CD8-positive, alpha-beta memory T cell (primary cell): ENCODE measurements at regions of chr17 and their contacts with region 1.

Region 1: DNA sequence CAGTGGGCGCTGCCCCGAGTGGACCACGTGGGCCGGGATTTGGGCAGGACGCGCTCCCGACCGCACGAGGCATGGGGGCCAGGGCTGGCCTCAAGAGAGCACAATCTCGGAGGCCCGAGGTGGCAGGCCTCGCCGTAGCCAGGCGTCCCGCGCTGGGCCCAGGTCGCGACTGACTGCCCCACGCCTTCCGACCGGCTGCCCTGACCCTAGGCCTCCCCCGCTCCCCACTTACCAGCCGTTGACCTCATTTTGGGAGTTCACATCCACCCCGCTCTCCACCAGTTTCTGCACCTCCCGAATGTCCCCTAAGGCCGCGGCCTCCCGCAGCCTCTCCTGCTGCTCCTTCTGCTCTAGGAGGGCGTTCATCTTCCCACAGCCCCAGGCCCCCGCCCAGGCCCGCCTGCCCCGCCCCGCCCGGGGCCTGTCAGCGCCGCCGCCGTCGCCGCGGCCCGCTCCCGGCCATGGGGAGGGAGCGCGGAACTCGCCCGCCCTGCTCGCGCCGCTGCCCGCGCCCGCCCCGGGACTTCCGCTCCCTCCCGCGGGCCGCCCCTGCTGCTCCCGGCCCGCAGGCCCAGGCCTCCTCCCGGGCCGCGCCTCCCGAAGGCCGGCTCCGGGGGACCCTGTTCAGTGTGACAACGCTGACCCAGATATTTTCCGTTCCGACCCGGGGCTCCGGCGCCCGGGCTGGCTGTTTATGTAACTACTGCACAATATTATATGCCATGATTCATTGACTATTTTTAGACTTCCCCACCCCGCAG is at the start of gene ANKRD40:
- DNase-seq: peak; percentile 77 to 93 (median 87)
- H3K4me3 ChIP-seq: peak within 1 kb of the TSS; percentile 66
- H3K4me3 Mint-ChIP-seq: peak within 1 kb of the TSS; percentile 92 to 96 (median 95)
- H3K27ac ChIP-seq: peak within 1 kb of the TSS; percentile 87
- H3K27ac Mint-ChIP-seq: peak within 1 kb of the TSS; percentile 95 to 100 (median 98)
- H3K4me1 ChIP-seq: peaks cover 30% of the 10 kb centered on the region
- H3K4me1 Mint-ChIP-seq: peaks cover 40 to 70% (median 56%) of the 10 kb centered on the region in 3 donors
- H3K27me3 ChIP-seq: no peaks in the 10 kb centered on the region
- H3K27me3 Mint-ChIP-seq: no peaks in the 10 kb centered on the region
- total RNA-seq, gene ANKRD40: 48.2 to 48.5 TPM

Region 2: DNA sequence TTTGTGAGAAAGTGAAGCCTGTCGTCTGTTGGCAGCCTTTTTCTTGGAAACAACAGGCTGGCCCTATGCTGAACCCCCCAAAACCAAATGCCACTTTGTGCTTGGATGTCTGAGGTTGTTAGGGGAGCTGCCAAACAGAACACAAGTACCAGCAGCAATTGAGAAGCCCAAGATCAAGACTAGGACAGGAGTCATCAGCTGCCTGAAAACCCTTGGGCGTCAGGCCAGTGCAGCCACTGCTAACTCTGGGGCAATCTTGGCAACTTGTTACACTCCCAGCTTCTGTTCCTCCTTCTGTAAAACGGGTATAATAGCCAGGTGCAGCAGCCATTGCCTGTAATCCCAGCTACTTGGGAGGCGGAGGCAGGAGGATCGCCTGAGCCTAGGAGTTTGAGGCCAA is 300.9 kb before region 1 on chr17:
- CTCF ChIA-PET with region 1: no interaction called
- POLR2A ChIA-PET with region 1: no interaction called
- DNase-seq: no peak
- H3K4me3 ChIP-seq: no peak overlapping the region
- H3K4me3 Mint-ChIP-seq: no peak overlapping the region
- H3K27ac ChIP-seq: no peak overlapping the region
- H3K27ac Mint-ChIP-seq: no peak overlapping the region
- H3K4me1 ChIP-seq: no peaks in the 10 kb centered on the region
- H3K4me1 Mint-ChIP-seq: no peaks in the 10 kb centered on the region
- H3K27me3 ChIP-seq: no peaks in the 10 kb centered on the region
- H3K27me3 Mint-ChIP-seq: peaks cover 9 to 33% of the 10 kb centered on the region in 2 donors

Region 3: GRCh38 chr17:50719144-50719923 is 11.9 kb after region 1 on chr17 and contains the start of gene LUC7L3:
- CTCF ChIA-PET with region 1: no interaction called
- POLR2A ChIA-PET with region 1: interaction called, 43 read pairs
- DNase-seq: peak; percentile 89 to 95 (median 91)
- H3K4me3 ChIP-seq: peak within 1 kb of the TSS; percentile 88
- H3K4me3 Mint-ChIP-seq: peak within 1 kb of the TSS; percentile 81 to 99 (median 98)
- H3K27ac ChIP-seq: peak within 1 kb of the TSS; percentile 90
- H3K27ac Mint-ChIP-seq: peak within 1 kb of the TSS; percentile 86 to 100 (median 99)
- H3K4me1 ChIP-seq: peaks cover 36% of the 10 kb centered on the region
- H3K4me1 Mint-ChIP-seq: peaks cover 23 to 47% (median 38%) of the 10 kb centered on the region in 3 donors
- H3K27me3 ChIP-seq: no peaks in the 10 kb centered on the region
- H3K27me3 Mint-ChIP-seq: peaks cover 0 to 1% of the 10 kb centered on the region in 2 donors
- total RNA-seq, gene LUC7L3: 113 to 120 TPM

Region 4: GRCh38 chr17:50872710-50873424 is 165.4 kb after region 1 on chr17:
- CTCF ChIA-PET with region 1: no interaction called
- POLR2A ChIA-PET with region 1: no interaction called
- DNase-seq: peak; percentile 27 to 70 (median 46)
- H3K4me3 ChIP-seq: no peak overlapping the region
- H3K4me3 Mint-ChIP-seq: peak overlapping the region in 3 of 7 donors; percentile 34 to 55 (median 51)
- H3K27ac ChIP-seq: no peak overlapping the region
- H3K27ac Mint-ChIP-seq: peak overlapping the region in 4 of 8 donors; percentile 40 to 58 (median 48)
- H3K4me1 ChIP-seq: peaks cover 44% of the 10 kb centered on the region
- H3K4me1 Mint-ChIP-seq: peaks cover 42 to 52% (median 47%) of the 10 kb centered on the region in 3 donors
- H3K27me3 ChIP-seq: no peaks in the 10 kb centered on the region
- H3K27me3 Mint-ChIP-seq: peaks cover 0 to 4% of the 10 kb centered on the region in 2 donors